Activated naive CD4-positive, alpha-beta T cell treated with anti-CD3 and anti-CD28 coated beads for 36 hours (primary cell): ENCODE measurements at regions of chr3 and their contacts with region 1.

Region 1: GRCh38 chr3:183285828-183286457 is 32.9 kb downstream of the B3GNT5 start:
- DNase-seq: peak; percentile 98
- H3K4me3 Mint-ChIP-seq: peak overlapping the region; percentile 67
- H3K27ac Mint-ChIP-seq: peak overlapping the region; percentile 97
- H3K4me1 Mint-ChIP-seq: peaks cover 40% of the 10 kb centered on the region
- H3K27me3 Mint-ChIP-seq: no peaks in the 10 kb centered on the region

Region 2: GRCh38 chr3:182967218-182968204 is 318.4 kb before region 1 on chr3:
- CTCF ChIA-PET with region 1: no interaction called
- intact Hi-C with region 1: loop called (anchors 1 kb)
- DNase-seq: peak; percentile 41
- H3K4me3 Mint-ChIP-seq: no peak overlapping the region
- H3K27ac Mint-ChIP-seq: peak overlapping the region; percentile 85
- H3K4me1 Mint-ChIP-seq: peaks cover 59% of the 10 kb centered on the region
- H3K27me3 Mint-ChIP-seq: no peaks in the 10 kb centered on the region

Region 3: GRCh38 chr3:183188895-183189462 is 97.0 kb before region 1 on chr3:
- CTCF ChIA-PET with region 1: interaction called, 11 read pairs
- intact Hi-C with region 1: loop called (anchors 1 kb)
- DNase-seq: peak; percentile 47
- H3K4me3 Mint-ChIP-seq: no peak overlapping the region
- H3K27ac Mint-ChIP-seq: no peak overlapping the region
- H3K4me1 Mint-ChIP-seq: peaks cover 27% of the 10 kb centered on the region
- H3K27me3 Mint-ChIP-seq: no peaks in the 10 kb centered on the region

Region 4: DNA sequence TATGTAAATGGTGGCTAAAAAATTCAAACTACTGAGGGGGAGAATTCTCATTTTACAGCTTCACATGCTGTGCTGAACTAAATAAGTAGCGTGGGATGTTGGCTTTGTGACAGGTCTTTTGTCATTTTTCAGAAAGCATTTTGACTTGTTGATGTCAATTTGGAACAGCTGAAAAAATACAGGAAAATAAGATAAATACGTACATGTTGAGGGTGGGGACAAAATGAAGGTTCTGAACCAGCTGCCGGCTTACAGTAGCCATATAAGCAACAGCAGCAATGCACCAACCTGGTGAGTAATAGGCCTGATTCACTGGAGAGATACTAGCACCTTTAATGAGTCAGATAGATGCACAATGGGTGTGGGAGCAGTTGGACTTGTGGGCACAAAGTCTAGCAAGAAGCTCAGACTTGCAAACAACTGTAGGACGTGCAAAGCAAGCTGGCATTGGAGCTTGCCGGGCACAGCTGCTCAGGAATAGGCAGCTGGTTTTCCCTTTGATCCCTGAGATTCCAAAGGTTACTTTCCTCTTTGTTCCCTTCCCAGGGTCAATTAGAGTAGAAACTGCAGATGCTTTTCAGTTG is 20.0 kb before region 1 on chr3:
- CTCF ChIA-PET with region 1: interaction called, 10 read pairs
- intact Hi-C with region 1: loop called (anchors 1 kb)
- DNase-seq: peak; percentile 80
- H3K4me3 Mint-ChIP-seq: no peak overlapping the region
- H3K27ac Mint-ChIP-seq: no peak overlapping the region
- H3K4me1 Mint-ChIP-seq: peaks cover 6% of the 10 kb centered on the region
- H3K27me3 Mint-ChIP-seq: no peaks in the 10 kb centered on the region

Region 5: DNA sequence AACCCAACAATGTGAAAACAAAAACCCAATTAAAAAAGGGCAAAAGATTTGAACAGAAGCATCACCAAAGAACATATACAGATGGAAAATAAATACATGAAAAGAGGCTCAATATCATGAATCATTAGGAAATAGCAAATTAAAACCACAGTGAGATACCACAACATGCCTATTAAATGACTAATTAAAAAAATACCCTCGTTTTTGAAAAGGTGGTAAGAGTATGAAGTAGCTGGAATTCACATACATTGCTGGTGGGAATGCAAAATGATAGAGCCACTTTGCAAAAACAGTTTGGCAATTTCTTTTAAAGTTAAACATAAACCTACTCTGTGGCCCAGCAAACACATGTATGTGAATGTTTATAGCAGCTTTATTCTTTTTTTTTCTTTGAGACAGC is 42.9 kb after region 1 on chr3:
- CTCF ChIA-PET with region 1: no interaction called
- intact Hi-C with region 1: loop called (anchors 1 kb)
- DNase-seq: no peak
- H3K4me3 Mint-ChIP-seq: no peak overlapping the region
- H3K27ac Mint-ChIP-seq: no peak overlapping the region
- H3K4me1 Mint-ChIP-seq: peaks cover 24% of the 10 kb centered on the region
- H3K27me3 Mint-ChIP-seq: no peaks in the 10 kb centered on the region

Region 6: GRCh38 chr3:183427876-183428446 is 142.0 kb after region 1 on chr3:
- CTCF ChIA-PET with region 1: no interaction called
- intact Hi-C with region 1: loop called (anchors 1 kb)
- DNase-seq: peak; percentile 40
- H3K4me3 Mint-ChIP-seq: peak overlapping the region; percentile 79
- H3K27ac Mint-ChIP-seq: no peak overlapping the region
- H3K4me1 Mint-ChIP-seq: peaks cover 27% of the 10 kb centered on the region
- H3K27me3 Mint-ChIP-seq: peaks cover 14% of the 10 kb centered on the region

Region 7: DNA sequence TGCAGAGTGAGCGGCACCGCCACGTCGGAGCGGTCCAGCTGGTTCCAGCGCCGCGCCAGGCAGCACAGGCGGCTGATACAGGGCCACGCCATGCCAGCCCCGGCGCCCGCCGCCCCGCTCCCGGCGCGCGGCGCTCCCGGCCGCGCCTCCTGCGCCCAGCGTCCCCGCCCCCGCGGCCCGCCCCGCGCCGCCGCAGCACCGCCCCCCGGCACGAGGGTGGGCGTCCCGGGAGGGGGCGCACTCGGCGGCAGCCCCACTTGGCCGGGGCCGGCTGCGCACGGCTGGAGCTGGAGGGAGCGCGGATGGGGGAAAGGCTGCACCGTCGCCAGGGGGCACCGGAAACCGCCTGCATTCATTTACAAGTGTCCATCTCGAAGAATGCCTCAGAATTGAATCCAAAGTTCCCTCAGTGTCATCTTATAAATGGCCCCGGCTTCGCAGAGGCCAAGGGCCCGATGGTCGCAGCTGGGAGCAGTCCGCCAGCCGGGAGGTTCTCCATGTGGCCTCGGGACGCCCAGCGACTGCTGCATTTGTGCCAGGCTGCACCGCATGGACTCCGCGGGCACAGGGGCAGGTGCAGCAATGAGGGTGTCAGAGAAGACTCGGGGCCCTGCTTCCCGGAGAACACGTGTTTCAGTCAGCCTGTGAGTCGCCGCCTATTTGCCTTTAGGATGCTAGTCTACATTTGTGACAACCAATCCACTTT is 539.7 kb after region 1 on chr3 and contains the start of gene MAP6D1:
- CTCF ChIA-PET with region 1: no interaction called
- intact Hi-C with region 1: no loop called
- DNase-seq: peak; percentile 55
- H3K4me3 Mint-ChIP-seq: peak within 1 kb of the TSS; percentile 70
- H3K27ac Mint-ChIP-seq: no peak within 1 kb of the TSS
- H3K4me1 Mint-ChIP-seq: peaks cover 16% of the 10 kb centered on the region
- H3K27me3 Mint-ChIP-seq: no peaks in the 10 kb centered on the region
- total RNA-seq, gene MAP6D1: 1.1 to 1.4 TPM